BJ (cell line): ENCODE measurements at regions of chr1 and their contacts with region 1.

Region 1: DNA sequence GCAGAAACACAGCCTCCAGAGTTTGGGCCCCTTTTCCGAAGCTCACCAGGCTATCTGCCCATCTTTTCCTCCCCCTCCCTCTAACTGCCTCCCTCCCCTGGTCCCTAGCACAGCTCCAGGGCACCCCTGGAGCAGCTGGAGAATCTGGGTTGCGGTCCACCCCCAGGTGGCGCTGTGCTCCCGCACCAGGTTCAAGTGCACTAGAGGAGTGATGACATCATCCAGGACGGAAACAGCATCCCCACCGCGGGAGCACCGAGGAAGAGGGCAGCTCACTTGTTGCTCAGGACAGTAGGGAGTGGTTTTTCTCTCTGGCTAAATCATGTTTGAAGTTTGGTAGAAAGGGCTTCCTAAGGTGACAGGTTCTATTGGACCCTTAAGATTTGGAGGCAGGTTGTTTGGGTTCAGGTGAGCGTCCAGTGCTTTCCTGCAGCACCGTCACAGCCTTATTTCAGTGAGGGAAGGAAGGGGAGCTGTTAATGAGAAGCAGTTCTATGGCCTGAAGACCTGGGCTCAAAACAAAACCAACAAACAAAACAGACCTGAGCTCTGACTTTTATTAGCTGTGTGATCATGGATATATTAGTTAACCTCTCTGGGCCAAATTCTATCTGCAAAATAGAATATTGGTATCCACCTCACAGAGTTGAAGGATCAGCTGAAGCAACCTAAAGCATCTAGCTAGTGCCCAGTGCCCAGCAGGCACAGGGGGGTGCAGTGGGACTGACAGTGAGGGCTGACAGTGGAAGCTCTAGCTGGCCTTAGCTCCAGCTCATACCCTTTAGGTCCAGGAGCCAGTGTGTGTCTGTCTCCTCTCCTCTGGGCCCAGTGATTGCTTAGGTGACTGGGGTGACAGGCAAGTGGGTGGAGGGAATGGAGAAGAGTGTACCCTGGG is 7.5 kb downstream of the SHISA4 start:
- DNase-seq: no peak
- H3K4me3 ChIP-seq: no peak overlapping the region
- H3K27me3 ChIP-seq: no peaks in the 10 kb centered on the region
- CTCF ChIP-seq: peak; percentile 97

Region 2: GRCh38 chr1:201640624-201641023 is 255.5 kb before region 1 on chr1:
- CTCF ChIA-PET with region 1: no interaction called
- POLR2A ChIA-PET with region 1: no interaction called
- DNase-seq: peak; percentile 50
- H3K4me3 ChIP-seq: no peak overlapping the region
- H3K27me3 ChIP-seq: no peaks in the 10 kb centered on the region
- CTCF ChIP-seq: no peak

Region 3: GRCh38 chr1:201838381-201838780 is 57.8 kb before region 1 on chr1:
- CTCF ChIA-PET with region 1: no interaction called
- POLR2A ChIA-PET with region 1: no interaction called
- DNase-seq: no peak
- H3K4me3 ChIP-seq: no peak overlapping the region
- H3K27me3 ChIP-seq: no peaks in the 10 kb centered on the region
- CTCF ChIP-seq: no peak

Region 4: DNA sequence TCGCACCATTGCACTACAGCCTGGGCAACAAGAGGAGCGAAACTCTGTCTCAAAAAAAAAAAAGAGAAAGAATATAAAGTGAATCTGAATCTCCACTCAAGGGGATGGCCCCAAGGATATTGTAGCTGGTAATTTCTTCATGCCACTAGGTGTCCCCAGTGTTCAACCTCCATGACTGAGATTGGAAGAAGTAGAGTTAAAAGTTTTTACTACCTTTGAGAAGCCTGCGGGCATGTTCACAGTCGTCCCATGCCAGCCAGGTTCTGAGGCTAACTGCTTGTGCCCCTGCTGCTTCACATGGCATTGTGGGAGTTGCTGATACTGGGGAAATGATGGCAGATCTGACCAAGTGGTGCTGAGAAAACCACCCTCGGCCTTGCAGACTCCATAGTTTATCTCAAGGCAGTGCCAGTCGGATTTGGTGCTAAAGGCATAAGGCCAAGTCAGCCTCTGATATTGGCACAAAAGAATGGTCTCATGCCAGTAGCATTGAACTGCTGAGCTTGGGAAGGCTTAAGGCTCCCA is 18.2 kb before region 1 on chr1:
- CTCF ChIA-PET with region 1: interaction called, 16 read pairs
- POLR2A ChIA-PET with region 1: no interaction called
- DNase-seq: no peak
- H3K4me3 ChIP-seq: no peak overlapping the region
- H3K27me3 ChIP-seq: no peaks in the 10 kb centered on the region
- CTCF ChIP-seq: peak; percentile 71

Region 5: DNA sequence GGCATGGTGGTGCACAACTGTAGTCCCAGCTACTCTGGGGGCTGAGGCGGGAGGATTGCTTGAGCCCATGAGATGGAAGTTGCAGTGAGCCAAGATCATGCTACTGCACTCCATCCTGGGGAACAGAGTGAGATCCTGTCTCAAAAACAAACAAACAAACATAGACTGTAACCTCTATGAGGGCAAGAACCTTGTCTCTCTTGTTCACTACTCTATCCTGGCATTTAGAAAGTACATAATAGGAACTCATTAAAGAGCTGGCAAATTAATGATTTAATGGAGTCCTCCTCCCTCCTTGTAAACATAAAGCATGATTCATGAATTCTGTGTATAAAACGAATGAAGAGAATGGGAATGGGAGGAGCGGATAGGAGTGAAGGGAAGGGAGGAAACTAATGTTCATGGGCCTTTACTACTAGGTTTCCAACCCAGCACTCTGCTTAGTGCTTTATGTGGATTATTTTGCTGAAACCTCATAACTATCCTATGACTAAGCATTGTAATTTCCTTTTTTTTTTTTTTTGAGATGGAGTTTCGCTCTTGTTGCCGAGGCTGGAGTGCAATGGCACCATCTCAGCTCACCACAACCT is 41.6 kb after region 1 on chr1:
- CTCF ChIA-PET with region 1: interaction called, 11 read pairs
- POLR2A ChIA-PET with region 1: interaction called, 4 read pairs
- DNase-seq: peak; percentile 83
- H3K4me3 ChIP-seq: no peak overlapping the region
- H3K27me3 ChIP-seq: no peaks in the 10 kb centered on the region
- CTCF ChIP-seq: no peak

Region 6: GRCh38 chr1:201955009-201955728 is 59.0 kb after region 1 on chr1 and contains the start of gene TIMM17A:
- CTCF ChIA-PET with region 1: interaction called, 26 read pairs
- POLR2A ChIA-PET with region 1: interaction called, 12 read pairs
- DNase-seq: peak; percentile 95
- H3K4me3 ChIP-seq: peak within 1 kb of the TSS; percentile 95
- H3K27me3 ChIP-seq: no peaks in the 10 kb centered on the region
- CTCF ChIP-seq: no peak
- polyA plus RNA-seq, gene TIMM17A: 54.6 and 87.5 TPM in 2 replicates

Region 7: DNA sequence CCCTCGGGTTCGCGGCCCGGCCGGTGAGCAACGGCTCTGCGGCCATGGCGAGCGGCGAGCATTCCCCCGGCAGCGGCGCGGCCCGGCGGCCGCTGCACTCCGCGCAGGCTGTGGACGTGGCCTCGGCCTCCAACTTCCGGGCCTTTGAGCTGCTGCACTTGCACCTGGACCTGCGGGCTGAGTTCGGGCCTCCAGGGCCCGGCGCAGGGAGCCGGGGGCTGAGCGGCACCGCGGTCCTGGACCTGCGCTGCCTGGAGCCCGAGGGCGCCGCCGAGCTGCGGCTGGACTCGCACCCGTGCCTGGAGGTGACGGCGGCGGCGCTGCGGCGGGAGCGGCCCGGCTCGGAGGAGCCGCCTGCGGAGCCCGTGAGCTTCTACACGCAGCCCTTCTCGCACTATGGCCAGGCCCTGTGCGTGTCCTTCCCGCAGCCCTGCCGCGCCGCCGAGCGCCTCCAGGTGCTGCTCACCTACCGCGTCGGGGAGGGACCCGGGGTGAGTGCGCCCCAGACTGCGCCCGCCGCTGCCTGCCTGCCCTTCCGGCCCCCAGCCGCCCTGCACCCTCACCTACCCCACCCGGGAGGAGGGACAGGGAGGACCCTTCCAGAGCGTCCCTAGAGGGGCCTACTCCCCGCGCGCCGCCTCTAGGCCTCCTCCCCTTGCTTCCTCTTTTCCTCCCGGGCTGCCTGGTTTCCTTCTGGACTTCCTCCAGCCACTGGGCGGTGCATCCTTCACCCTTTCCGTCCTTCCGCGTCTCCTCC is 86.6 kb after region 1 on chr1 and contains the start of gene RNPEP:
- CTCF ChIA-PET with region 1: interaction called, 15 read pairs
- POLR2A ChIA-PET with region 1: interaction called, 9 read pairs
- DNase-seq: no peak
- H3K4me3 ChIP-seq: peak within 1 kb of the TSS; percentile 81
- H3K27me3 ChIP-seq: no peaks in the 10 kb centered on the region
- CTCF ChIP-seq: no peak
- polyA plus RNA-seq, gene RNPEP: 42.6 and 51.5 TPM in 2 replicates